ENCODE measurements at regions of chr4 and their contacts with region 1.

Region 1: GRCh38 chr4:86043755-86044592 is 315.9 kb downstream of the MAPK10 start:
- DNase-seq: no peak
- H3K4me3 ChIP-seq: no peak overlapping the region
- CTCF ChIP-seq: peak; percentile 33

Region 2: GRCh38 chr4:85084380-85085094 is 959.4 kb before region 1 on chr4:
- CTCF ChIA-PET with region 1: interaction called, 33 read pairs
- POLR2A ChIA-PET with region 1: no interaction called
- DNase-seq: peak; percentile 29
- H3K4me3 ChIP-seq: no peak overlapping the region
- CTCF ChIP-seq: peak; percentile 61

Region 3: DNA sequence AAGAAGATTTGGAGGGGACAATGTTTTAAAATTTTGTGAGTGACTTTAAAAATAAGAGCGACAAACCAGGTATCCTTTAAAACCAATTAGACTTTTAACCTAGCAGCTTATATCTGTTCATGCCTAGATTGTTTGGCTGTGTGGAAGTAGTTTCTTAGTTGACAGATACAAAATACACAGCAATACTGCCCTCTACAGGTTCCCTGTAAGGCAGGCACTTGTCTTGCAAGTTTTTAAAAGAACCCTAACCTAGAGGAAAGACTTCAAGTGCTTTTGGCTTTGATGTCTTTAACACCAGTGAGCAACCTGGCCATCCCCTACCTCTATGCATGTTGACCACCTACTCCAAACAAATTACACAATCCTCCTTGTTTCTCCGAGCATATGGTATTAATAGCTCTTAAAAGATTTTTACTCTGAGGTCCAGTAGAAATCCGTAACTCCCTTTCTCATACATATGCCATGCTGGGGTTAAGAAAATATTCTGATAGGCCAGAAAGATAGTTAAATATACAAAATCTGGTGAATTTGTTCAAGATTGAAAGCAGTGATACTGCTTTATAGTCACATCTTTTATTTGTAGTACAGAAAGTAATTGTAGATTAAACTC is 296.0 kb before region 1 on chr4:
- CTCF ChIA-PET with region 1: interaction called, 13 read pairs
- POLR2A ChIA-PET with region 1: no interaction called
- DNase-seq: peak; percentile 65
- H3K4me3 ChIP-seq: no peak overlapping the region
- CTCF ChIP-seq: peak; percentile 65

Region 4: DNA sequence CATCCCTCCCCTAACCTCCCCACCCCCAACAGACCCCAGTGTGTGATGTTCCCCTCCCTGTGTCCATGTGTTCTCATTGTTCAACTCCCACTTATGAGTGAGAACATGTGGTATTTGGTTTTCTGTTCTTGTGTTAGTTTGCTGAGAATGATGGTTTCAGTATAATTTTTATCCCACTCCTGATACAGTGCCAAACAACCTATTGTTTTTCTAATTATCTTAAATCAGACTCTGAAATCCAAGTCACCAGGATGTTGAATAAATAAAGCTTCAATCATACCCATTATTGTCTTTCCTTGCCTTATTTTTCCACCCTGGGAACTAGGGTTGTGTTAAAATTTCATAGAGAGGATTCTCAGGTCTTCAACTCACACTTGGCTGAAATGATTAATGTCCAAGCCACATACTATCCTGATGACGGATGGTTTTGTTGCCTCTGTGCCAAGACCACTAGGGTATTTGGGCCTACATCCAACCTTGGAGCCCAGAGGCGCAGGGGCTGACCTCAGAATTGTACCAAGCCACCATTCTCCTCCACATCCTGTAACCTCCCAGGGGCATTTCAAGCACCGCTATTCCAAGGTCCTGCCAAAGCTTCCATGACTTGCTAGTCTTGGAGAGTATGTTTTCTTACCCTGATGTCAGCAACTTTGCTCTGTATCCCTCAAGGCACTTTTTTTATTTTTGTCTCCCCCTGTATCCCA is 236.6 kb before region 1 on chr4:
- CTCF ChIA-PET with region 1: interaction called, 24 read pairs
- POLR2A ChIA-PET with region 1: no interaction called
- DNase-seq: no peak
- H3K4me3 ChIP-seq: no peak overlapping the region
- CTCF ChIP-seq: no peak

Region 5: GRCh38 chr4:86055898-86056297 is 11.9 kb after region 1 on chr4:
- CTCF ChIA-PET with region 1: interaction called, 25 read pairs
- POLR2A ChIA-PET with region 1: no interaction called
- DNase-seq: no peak
- H3K4me3 ChIP-seq: no peak overlapping the region
- CTCF ChIP-seq: no peak

Region 6: DNA sequence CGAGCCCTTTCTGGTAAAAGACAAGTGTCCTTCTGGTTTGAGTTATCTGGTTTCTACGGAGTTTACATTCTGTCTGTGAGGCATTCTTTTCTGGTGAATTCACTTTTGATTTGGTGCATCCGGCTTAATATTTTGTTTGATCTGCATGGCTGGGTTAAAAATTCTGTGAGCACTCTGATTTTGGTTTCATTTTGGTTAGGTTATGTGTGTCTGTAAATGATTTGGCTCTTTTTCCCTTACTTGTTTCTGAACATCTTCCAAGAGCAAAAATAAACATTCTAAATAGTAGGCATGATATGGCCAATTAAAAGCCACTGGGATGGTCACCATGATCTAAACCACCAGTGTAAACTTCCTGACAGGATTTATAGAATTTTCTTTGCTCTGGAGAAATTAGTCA is 464.5 kb after region 1 on chr4:
- CTCF ChIA-PET with region 1: no interaction called
- POLR2A ChIA-PET with region 1: no interaction called
- DNase-seq: peak; percentile 59
- H3K4me3 ChIP-seq: peak overlapping the region; percentile 7
- CTCF ChIP-seq: no peak

Measured in AG04449 (cell line).